ENCODE measurements at regions of chr12 and their contacts with region 1.

Region 1: GRCh38 chr12:58310828-58311622 is 369.7 kb downstream of the ATP23 start:
- DNase-seq: peak; percentile 99
- ATAC-seq: peak; percentile 81
- H3K4me3 ChIP-seq: no peak overlapping the region
- H3K27ac ChIP-seq: peak overlapping the region; percentile 46; the same call in 1 of the 2 replicates
- H3K4me1 ChIP-seq: peaks cover 15% of the 10 kb centered on the region
- H3K27me3 ChIP-seq: no peaks in the 10 kb centered on the region
- CTCF ChIP-seq: no peak
- POLR2A ChIP-seq: no peak
- RAD21 ChIP-seq: no peak

Region 2: GRCh38 chr12:57993025-57993424 is 318.0 kb before region 1 on chr12:
- CTCF ChIA-PET with region 1: no interaction called
- POLR2A ChIA-PET with region 1: no interaction called
- dilution Hi-C with region 1: no loop called
- in situ Hi-C with region 1: no loop called
- intact Hi-C with region 1: loop called (anchors 10 kb)
- DNase-seq: peak; percentile 28
- ATAC-seq: peak; percentile 88
- H3K4me3 ChIP-seq: no peak overlapping the region
- H3K27ac ChIP-seq: no peak overlapping the region
- H3K4me1 ChIP-seq: no peaks in the 10 kb centered on the region
- H3K27me3 ChIP-seq: no peaks in the 10 kb centered on the region; the same call in 1 of the 2 replicates
- CTCF ChIP-seq: peak; percentile 49
- POLR2A ChIP-seq: no peak
- RAD21 ChIP-seq: peak; percentile 45; the same call in 1 of the 2 replicates